Sciatic nerve (tissue), 2 donors: ENCODE measurements at regions of chr11 and their contacts with region 1.

Region 1: GRCh38 chr11:75204685-75205563 is 35.6 kb upstream of the TPBGL start:
- DNase-seq: peak; percentile 93
- ATAC-seq: peak; percentile 96

Region 2: GRCh38 chr11:75142714-75143419 is 62.1 kb before region 1 on chr11:
- intact Hi-C with region 1: loop called (anchors 5 kb)
- DNase-seq: peak; percentile 83
- ATAC-seq: peak; percentile 95